ENCODE measurements at regions of chr13 and their contacts with region 1.

Region 1: GRCh38 chr13:114334305-114335053 is 20.2 kb downstream of the CHAMP1 start:
- DNase-seq: peak in 1 of 35 experiments; percentile 6
- ATAC-seq: no peak
- H3K4me3 ChIP-seq: peak overlapping the region in 1 of 2 donors; percentile 15
- H3K4me3 Mint-ChIP-seq: peak overlapping the region; percentile 39 to 68 (median 60)
- H3K27ac ChIP-seq: no peak overlapping the region
- H3K27ac Mint-ChIP-seq: peak overlapping the region; percentile 66 to 71
- H3K4me1 ChIP-seq: peaks cover 0 to 13% of the 10 kb centered on the region in 2 experiments
- H3K4me1 Mint-ChIP-seq: peaks cover 11 to 26% (median 23%) of the 10 kb centered on the region in 3 donors
- H3K27me3 ChIP-seq: no peaks in the 10 kb centered on the region
- H3K27me3 Mint-ChIP-seq: no peaks in the 10 kb centered on the region

Region 2: DNA sequence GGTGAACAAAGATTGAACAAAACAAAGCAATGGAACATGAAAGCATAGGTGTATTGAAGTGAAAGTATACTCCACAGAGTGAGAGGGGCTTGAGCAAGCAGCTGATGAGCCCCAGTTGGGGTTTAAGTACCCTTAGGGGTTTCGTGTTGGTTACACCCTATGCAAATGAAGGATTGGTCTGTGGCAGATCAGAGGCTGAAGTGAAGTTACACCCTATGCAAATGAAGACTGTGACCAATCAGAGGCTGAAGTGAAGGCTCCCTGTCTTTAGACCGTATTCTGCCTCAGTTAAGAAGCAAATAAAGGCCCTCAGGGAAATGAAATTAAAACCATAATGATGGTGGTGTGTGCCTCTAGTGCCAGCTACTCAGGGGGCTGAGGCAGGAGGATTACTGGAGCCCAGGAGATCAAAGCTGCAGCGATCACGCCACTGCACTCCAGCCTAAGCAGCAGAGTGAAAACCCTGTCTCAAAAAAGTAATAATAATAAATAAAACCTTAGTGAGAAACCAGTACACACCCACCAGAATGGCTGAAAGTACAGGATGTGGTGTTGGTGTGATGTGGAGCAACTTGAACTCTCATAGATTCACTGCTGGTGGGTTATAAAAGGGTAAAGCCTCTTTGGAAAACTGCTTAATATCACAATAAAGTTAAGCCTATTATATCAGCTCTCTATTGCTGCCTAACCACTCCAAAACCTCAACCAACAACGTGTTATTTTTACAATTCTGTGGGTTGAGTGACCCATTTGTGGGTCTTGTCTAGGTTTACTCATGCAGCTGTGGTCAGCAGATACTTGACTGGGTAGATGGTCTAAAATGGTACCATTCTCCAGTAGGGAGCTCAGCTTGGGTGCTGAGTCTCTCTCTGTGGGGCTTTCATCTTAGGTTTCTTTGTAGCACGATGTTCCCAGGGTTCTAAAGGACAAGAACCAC is 65.9 kb before region 1 on chr13:
- CTCF ChIA-PET with region 1: interaction called in 1 of 2 experiments, 14 read pairs
- POLR2A ChIA-PET with region 1: interaction called in 1 of 2 experiments, 5 read pairs
- DNase-seq: peak in 10 of 35 experiments; percentile 4 to 50 (median 16)
- ATAC-seq: peak in 3 of 4 experiments; percentile 36 to 65 (median 63)
- H3K4me3 ChIP-seq: peak overlapping the region in 1 of 2 donors; percentile 42
- H3K4me3 Mint-ChIP-seq: peak overlapping the region; percentile 44 to 57 (median 48)
- H3K27ac ChIP-seq: peak overlapping the region; percentile 59
- H3K27ac Mint-ChIP-seq: peak overlapping the region; percentile 70 to 88
- H3K4me1 ChIP-seq: peaks cover 0 to 46% of the 10 kb centered on the region in 2 experiments
- H3K4me1 Mint-ChIP-seq: peaks cover 25 to 36% (median 33%) of the 10 kb centered on the region in 3 donors
- H3K27me3 ChIP-seq: no peaks in the 10 kb centered on the region
- H3K27me3 Mint-ChIP-seq: no peaks in the 10 kb centered on the region

Region 3: GRCh38 chr13:114303700-114304327 is 30.7 kb before region 1 on chr13:
- CTCF ChIA-PET with region 1: no interaction called
- POLR2A ChIA-PET with region 1: no interaction called
- DNase-seq: no peak
- ATAC-seq: no peak
- H3K4me3 ChIP-seq: no peak overlapping the region
- H3K4me3 Mint-ChIP-seq: no peak overlapping the region
- H3K27ac ChIP-seq: no peak overlapping the region
- H3K27ac Mint-ChIP-seq: no peak overlapping the region
- H3K4me1 ChIP-seq: no peaks in the 10 kb centered on the region
- H3K4me1 Mint-ChIP-seq: peaks cover 0 to 2% (median 0%) of the 10 kb centered on the region in 3 donors
- H3K27me3 ChIP-seq: no peaks in the 10 kb centered on the region
- H3K27me3 Mint-ChIP-seq: no peaks in the 10 kb centered on the region

Measured in T-cell (primary cell).